IMR-90 (cell line): ENCODE measurements at regions of chr11 and their contacts with region 1.

Region 1: GRCh38 chr11:44893846-44894617 is 56.7 kb downstream of the TP53I11 start:
- DNase-seq: peak; percentile 66
- ATAC-seq: peak; percentile 97
- H3K4me3 ChIP-seq: no peak overlapping the region
- H3K27ac ChIP-seq: no peak overlapping the region
- H3K4me1 ChIP-seq: peaks cover 2% of the 10 kb centered on the region; the same call in 1 of the 2 replicates
- H3K27me3 ChIP-seq: peaks cover 17% of the 10 kb centered on the region
- CTCF ChIP-seq: peak; percentile 99
- POLR2A ChIP-seq: peak; percentile 66
- RAD21 ChIP-seq: peak; percentile 100

Region 2: DNA sequence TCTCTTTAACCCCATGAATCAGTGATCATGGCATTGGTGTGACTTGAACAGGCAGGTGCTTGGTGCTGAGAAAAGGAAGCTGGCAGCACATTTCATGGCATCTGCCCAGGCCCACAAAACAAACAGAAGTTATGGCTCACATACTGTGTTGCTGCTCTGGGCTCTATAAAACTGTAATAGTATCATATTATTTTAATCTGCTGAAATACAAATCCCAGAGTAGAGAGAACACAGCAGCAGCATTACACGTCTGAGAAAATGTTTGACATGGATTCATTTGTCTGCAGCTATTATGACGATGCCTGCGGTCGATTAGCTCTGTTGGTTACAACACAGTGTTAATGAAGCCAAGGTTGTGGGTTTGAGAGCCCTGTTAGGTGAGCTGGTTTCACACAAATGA is 664.9 kb before region 1 on chr11:
- CTCF ChIA-PET with region 1: no interaction called
- POLR2A ChIA-PET with region 1: no interaction called
- dilution Hi-C with region 1: no loop called
- in situ Hi-C with region 1: no loop called
- intact Hi-C with region 1: no loop called
- DNase-seq: no peak
- ATAC-seq: no peak
- H3K4me3 ChIP-seq: no peak overlapping the region
- H3K27ac ChIP-seq: peak overlapping the region; percentile 45; the same call in 1 of the 2 replicates
- H3K4me1 ChIP-seq: peaks cover 9% of the 10 kb centered on the region
- H3K27me3 ChIP-seq: no peaks in the 10 kb centered on the region
- CTCF ChIP-seq: no peak
- POLR2A ChIP-seq: no peak
- RAD21 ChIP-seq: no peak

Region 3: GRCh38 chr11:44556735-44557409 is 337.2 kb before region 1 on chr11:
- CTCF ChIA-PET with region 1: interaction called, 4 read pairs
- POLR2A ChIA-PET with region 1: no interaction called
- dilution Hi-C with region 1: no loop called
- in situ Hi-C with region 1: no loop called
- intact Hi-C with region 1: loop called (anchors 1 kb)
- DNase-seq: peak; percentile 59
- ATAC-seq: peak; percentile 82
- H3K4me3 ChIP-seq: no peak overlapping the region
- H3K27ac ChIP-seq: no peak overlapping the region
- H3K4me1 ChIP-seq: no peaks in the 10 kb centered on the region
- H3K27me3 ChIP-seq: no peaks in the 10 kb centered on the region; the same call in 1 of the 2 replicates
- CTCF ChIP-seq: peak; percentile 84
- POLR2A ChIP-seq: no peak
- RAD21 ChIP-seq: peak; percentile 90

Region 4: DNA sequence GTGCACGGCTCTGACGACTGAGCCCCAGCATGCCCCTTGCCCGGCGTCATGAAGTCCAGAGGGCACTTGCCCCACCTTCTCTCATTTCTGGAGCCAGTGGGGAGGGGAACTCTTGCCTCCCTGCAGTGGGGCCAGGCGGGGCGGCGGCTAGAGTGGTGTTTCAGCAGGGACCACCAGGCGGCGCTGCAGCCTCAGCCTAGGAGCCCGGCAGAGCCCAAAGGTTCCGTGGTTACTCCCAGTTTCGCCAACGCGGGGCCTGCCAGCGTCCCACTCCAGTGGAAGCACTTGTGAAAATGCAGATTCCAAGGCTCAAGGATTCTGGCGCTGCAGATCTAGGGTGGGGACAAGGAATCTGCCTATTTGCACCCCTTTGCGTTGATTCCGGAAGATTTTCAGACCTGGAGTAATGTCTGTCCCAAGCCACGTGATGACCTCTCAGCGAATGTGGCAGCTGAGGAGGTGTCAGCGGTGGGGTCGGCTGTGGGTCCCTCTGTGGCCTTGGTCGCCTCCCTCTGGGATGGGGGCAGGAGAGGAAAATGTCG is 272.8 kb before region 1 on chr11:
- CTCF ChIA-PET with region 1: no interaction called
- POLR2A ChIA-PET with region 1: no interaction called
- dilution Hi-C with region 1: no loop called
- in situ Hi-C with region 1: loop called (anchors 5 kb)
- intact Hi-C with region 1: loop called (anchors 1 kb)
- DNase-seq: peak; percentile 41
- ATAC-seq: peak; percentile 88
- H3K4me3 ChIP-seq: no peak overlapping the region
- H3K27ac ChIP-seq: no peak overlapping the region
- H3K4me1 ChIP-seq: no peaks in the 10 kb centered on the region; the same call in 1 of the 2 replicates
- H3K27me3 ChIP-seq: no peaks in the 10 kb centered on the region
- CTCF ChIP-seq: peak; percentile 90
- POLR2A ChIP-seq: no peak
- RAD21 ChIP-seq: peak; percentile 97

Region 5: GRCh38 chr11:44627911-44628729 is 265.9 kb before region 1 on chr11:
- CTCF ChIA-PET with region 1: no interaction called
- POLR2A ChIA-PET with region 1: no interaction called
- dilution Hi-C with region 1: no loop called
- in situ Hi-C with region 1: loop called (anchors 5 kb)
- intact Hi-C with region 1: loop called (anchors 2 kb)
- DNase-seq: peak; percentile 49
- ATAC-seq: peak; percentile 83
- H3K4me3 ChIP-seq: no peak overlapping the region
- H3K27ac ChIP-seq: no peak overlapping the region
- H3K4me1 ChIP-seq: peaks cover 5% of the 10 kb centered on the region; the same call in 1 of the 2 replicates
- H3K27me3 ChIP-seq: peaks cover 10% of the 10 kb centered on the region
- CTCF ChIP-seq: no peak
- POLR2A ChIP-seq: no peak
- RAD21 ChIP-seq: no peak

Region 6: GRCh38 chr11:44760917-44761550 is 133.0 kb before region 1 on chr11:
- CTCF ChIA-PET with region 1: no interaction called
- POLR2A ChIA-PET with region 1: no interaction called
- dilution Hi-C with region 1: loop called (anchors 25 kb)
- in situ Hi-C with region 1: no loop called
- intact Hi-C with region 1: no loop called
- DNase-seq: peak; percentile 96
- ATAC-seq: peak; percentile 94
- H3K4me3 ChIP-seq: no peak overlapping the region
- H3K27ac ChIP-seq: peak overlapping the region; percentile 33; the same call in 1 of the 2 replicates
- H3K4me1 ChIP-seq: peaks cover 20% of the 10 kb centered on the region
- H3K27me3 ChIP-seq: no peaks in the 10 kb centered on the region; the same call in 1 of the 2 replicates
- CTCF ChIP-seq: no peak
- POLR2A ChIP-seq: no peak
- RAD21 ChIP-seq: no peak